Activated CD4-positive, alpha-beta T cell treated with anti-CD3 and anti-CD28 coated beads for 36 hours (primary cell): ENCODE measurements at regions of chr15 and their contacts with region 1.

Region 1: GRCh38 chr15:67542420-67543347 is at the start of gene MAP2K5:
- DNase-seq: peak; percentile 90
- ATAC-seq: peak; percentile 70
- H3K4me3 Mint-ChIP-seq: peak within 1 kb of the TSS; percentile 82
- H3K27ac Mint-ChIP-seq: peak within 1 kb of the TSS; percentile 95
- H3K4me1 Mint-ChIP-seq: peaks cover 43% of the 10 kb centered on the region
- H3K27me3 Mint-ChIP-seq: no peaks in the 10 kb centered on the region
- total RNA-seq, gene MAP2K5: 18.0 to 26.7 TPM

Region 2: DNA sequence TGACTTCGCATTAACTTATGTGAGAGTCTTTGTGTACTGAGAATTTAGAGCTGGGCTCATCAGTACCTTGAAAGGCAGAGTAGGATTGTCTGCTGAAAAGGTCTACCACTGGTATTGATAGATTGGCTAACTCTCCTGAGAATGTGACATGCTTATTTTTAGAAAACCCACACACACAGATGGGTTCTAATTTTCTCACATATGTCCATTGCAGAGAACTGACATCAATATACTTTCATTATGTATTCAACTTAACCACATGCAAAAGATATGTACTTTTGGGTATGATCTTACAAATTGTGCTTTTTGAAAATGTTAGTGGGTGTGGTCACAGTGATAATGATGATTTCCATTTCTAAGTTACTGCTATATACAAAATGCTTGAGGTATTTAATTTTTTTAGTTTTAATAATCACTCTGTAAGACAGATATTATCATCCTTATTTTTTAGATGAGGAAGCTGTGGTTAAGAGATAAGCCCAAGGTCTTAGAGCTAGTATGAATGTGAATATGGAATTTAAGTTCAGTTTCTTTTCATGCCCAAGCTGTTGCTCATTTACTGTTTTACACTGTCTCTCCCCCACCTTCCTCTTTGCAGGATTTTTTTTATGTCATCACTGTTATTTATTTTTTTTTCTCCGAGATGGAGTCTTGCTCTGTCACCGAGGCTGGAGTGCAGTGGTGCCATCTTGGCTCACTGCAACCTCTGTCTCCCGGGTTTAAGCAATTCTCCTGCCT is 22.1 kb after region 1 on chr15:
- CTCF ChIA-PET with region 1: interaction called, 4 read pairs
- POLR2A ChIA-PET with region 1: no interaction called
- intact Hi-C with region 1: loop called in 1 of 2 experiments (anchors 2 kb)
- DNase-seq: no peak
- ATAC-seq: peak; percentile 82
- H3K4me3 Mint-ChIP-seq: no peak overlapping the region
- H3K27ac Mint-ChIP-seq: no peak overlapping the region
- H3K4me1 Mint-ChIP-seq: peaks cover 20% of the 10 kb centered on the region
- H3K27me3 Mint-ChIP-seq: no peaks in the 10 kb centered on the region